Activated T-helper 1 cell treated with anti-CD3 and anti-CD28 coated beads, Interleukin-12 subunit alpha, Interleukin-12 subunit beta, Interleukin-2, Interleukin-4 antibody, amounts not matched to agents 30 ng/mL and 10 ng/mL and 1 ng/mL, durations not matched to agents 14 hours and 24 hours and 36 hours (primary cell): ENCODE measurements at regions of chr2 and their contacts with region 1.

Region 1: GRCh38 chr2:204024503-204024902 is 87.9 kb downstream of the ICOS start:
- DNase-seq: no peak
- H3K4me3 Mint-ChIP-seq: no peak overlapping the region
- H3K27ac Mint-ChIP-seq: peak overlapping the region; percentile 32
- H3K4me1 Mint-ChIP-seq: peaks cover 75% of the 10 kb centered on the region
- H3K27me3 Mint-ChIP-seq: no peaks in the 10 kb centered on the region

Region 2: GRCh38 chr2:202634556-202635427 is 1389.7 kb before region 1 on chr2 and contains the start of gene FAM117B:
- intact Hi-C with region 1: loop called (anchors 10 kb)
- DNase-seq: peak; percentile 98
- H3K4me3 Mint-ChIP-seq: peak within 1 kb of the TSS; percentile 91
- H3K27ac Mint-ChIP-seq: peak within 1 kb of the TSS; percentile 89
- H3K4me1 Mint-ChIP-seq: peaks cover 45% of the 10 kb centered on the region
- H3K27me3 Mint-ChIP-seq: no peaks in the 10 kb centered on the region
- total RNA-seq, gene FAM117B: 9.3 and 9.5 TPM in 2 replicates

Region 3: GRCh38 chr2:203535078-203535783 is 489.3 kb before region 1 on chr2 and contains the start of gene RAPH1:
- intact Hi-C with region 1: no loop called
- DNase-seq: peak; percentile 44
- H3K4me3 Mint-ChIP-seq: peak within 1 kb of the TSS; percentile 89
- H3K27ac Mint-ChIP-seq: peak within 1 kb of the TSS; percentile 90
- H3K4me1 Mint-ChIP-seq: peaks cover 30% of the 10 kb centered on the region
- H3K27me3 Mint-ChIP-seq: peaks cover 52% of the 10 kb centered on the region
- total RNA-seq, gene RAPH1: 4.2 and 4.6 TPM in 2 replicates

Region 4: GRCh38 chr2:203858176-203858575 is 166.3 kb before region 1 on chr2:
- intact Hi-C with region 1: loop called (anchors 5 kb)
- DNase-seq: no peak
- H3K4me3 Mint-ChIP-seq: no peak overlapping the region
- H3K27ac Mint-ChIP-seq: no peak overlapping the region
- H3K4me1 Mint-ChIP-seq: peaks cover 76% of the 10 kb centered on the region
- H3K27me3 Mint-ChIP-seq: no peaks in the 10 kb centered on the region

Region 5: GRCh38 chr2:203951366-203951902 is 73.1 kb before region 1 on chr2:
- intact Hi-C with region 1: loop called (anchors 2 kb)
- DNase-seq: peak; percentile 34
- H3K4me3 Mint-ChIP-seq: peak overlapping the region; percentile 85
- H3K27ac Mint-ChIP-seq: peak overlapping the region; percentile 92
- H3K4me1 Mint-ChIP-seq: peaks cover 85% of the 10 kb centered on the region
- H3K27me3 Mint-ChIP-seq: no peaks in the 10 kb centered on the region

Region 6: GRCh38 chr2:203997980-203998809 is 26.3 kb before region 1 on chr2:
- intact Hi-C with region 1: loop called (anchors 1 kb)
- DNase-seq: no peak
- H3K4me3 Mint-ChIP-seq: peak overlapping the region; percentile 47
- H3K27ac Mint-ChIP-seq: peak overlapping the region; percentile 83
- H3K4me1 Mint-ChIP-seq: peaks cover 66% of the 10 kb centered on the region
- H3K27me3 Mint-ChIP-seq: no peaks in the 10 kb centered on the region

Region 7: DNA sequence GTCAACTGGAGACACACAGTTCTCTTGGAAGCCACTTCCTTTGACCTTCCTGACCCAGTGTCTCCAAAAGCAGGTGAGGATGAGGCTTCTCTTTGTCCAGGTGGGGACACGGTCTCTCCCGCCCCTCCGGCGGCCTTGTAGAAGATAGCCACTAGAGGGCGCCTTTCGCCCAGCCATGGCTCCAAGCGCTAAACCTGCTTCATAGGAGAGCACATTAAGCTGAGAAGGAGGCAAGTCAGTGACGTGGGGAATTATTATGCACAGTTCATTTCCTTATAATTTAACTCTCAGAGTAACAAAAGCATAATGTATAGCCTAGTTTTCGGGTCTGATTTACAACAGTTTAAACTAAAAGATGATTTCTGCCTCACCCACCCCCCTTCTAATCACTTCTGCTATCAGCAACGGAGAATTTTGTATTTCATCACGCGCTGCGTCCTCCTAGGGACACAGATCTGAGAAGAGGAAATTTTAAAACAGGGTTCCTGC is 120.8 kb after region 1 on chr2:
- intact Hi-C with region 1: loop called (anchors 1 kb)
- DNase-seq: peak; percentile 71
- H3K4me3 Mint-ChIP-seq: peak overlapping the region; percentile 79
- H3K27ac Mint-ChIP-seq: peak overlapping the region; percentile 63
- H3K4me1 Mint-ChIP-seq: peaks cover 15% of the 10 kb centered on the region
- H3K27me3 Mint-ChIP-seq: peaks cover 8% of the 10 kb centered on the region

Region 8: DNA sequence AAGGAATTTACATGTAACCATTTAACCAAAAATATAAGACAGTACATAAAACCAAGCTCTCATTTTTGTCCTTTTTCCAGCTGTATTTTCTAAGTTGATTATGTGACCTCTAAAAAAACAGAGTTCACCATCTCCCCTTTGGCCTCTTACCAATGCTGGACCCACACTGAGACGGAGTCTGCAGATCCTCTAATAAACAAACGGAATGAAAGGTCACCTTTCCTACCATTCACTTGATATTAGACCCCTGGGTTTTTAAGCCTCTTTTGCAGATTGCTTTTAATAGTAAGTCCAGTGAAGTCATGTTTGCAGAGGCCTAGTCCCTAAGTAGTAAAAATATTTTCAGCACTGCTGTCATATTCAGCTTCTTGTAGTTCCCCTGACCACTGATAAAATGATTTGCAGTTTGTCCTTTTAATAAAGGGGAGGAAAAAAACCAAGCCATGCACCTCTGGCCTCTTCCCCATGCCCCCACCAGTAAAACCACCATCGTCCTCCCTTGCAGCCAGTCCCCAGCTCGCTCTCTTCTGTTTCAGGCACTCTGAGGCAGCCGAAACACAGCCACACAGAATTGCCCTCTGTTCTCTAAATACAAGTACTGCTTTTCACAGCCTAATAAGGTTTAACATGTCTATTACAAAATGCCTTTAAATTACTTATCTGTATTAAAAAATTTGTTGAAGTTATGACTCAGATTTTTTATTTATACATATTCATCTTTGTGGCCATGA is 948.3 kb after region 1 on chr2:
- intact Hi-C with region 1: loop called (anchors 5 kb)
- DNase-seq: no peak
- H3K4me3 Mint-ChIP-seq: no peak overlapping the region
- H3K27ac Mint-ChIP-seq: peak overlapping the region; percentile 49
- H3K4me1 Mint-ChIP-seq: peaks cover 38% of the 10 kb centered on the region
- H3K27me3 Mint-ChIP-seq: no peaks in the 10 kb centered on the region